ENCODE measurements at regions of chr1 and their contacts with region 1.

Region 1: GRCh38 chr1:103101399-103101798 is 6.9 kb downstream of the COL11A1 start:
- DNase-seq: no peak
- ATAC-seq: no peak
- H3K4me3 ChIP-seq: no peak overlapping the region
- H3K27ac ChIP-seq: no peak overlapping the region
- H3K4me1 ChIP-seq: peaks cover 0 to 1% (median 0%) of the 10 kb centered on the region in 9 donors
- H3K27me3 ChIP-seq: peaks cover 0 to 8% (median 3%) of the 10 kb centered on the region in 7 donors
- CTCF ChIP-seq: no peak

Region 2: DNA sequence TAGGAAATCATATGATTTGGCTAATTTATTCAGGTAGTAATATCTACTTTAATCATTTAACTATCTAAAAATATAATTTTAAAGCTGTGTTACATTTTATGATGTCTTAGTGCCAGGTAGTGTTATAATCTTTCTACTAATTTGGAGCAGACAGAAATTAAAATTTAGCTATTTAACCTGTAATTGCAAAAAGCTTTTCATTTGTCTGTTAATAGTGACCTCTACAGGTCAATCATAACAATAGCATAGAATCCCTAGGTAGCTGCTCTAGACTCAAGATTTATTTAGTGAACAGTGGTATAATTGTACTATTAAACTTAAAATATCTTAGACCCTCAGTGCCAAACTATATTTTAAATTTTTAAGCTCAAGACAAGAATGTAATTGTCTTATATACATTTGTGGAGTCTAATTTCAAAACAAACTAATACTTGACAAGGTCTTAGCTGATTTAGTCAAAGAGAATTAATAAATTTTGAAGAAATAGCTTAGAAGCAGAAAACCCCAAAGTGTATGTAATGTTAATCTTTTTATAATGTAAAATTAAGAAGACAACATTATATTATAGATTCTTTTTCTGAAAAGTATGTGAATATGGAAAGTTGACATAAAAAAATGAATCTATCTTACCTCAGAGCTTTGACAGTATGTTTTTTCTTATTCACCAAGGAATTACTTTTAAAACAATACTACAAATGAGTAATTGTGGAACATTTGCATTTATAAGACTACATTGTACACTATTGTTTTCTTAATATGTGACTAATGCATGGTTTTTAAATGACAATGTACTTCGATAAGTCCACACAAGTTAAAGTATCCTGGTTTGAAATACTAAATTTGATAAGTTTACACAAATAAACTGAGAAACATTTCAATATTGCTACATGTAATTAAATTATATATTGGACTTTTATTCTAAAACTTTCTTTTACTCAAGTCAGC is 360.0 kb after region 1 on chr1:
- intact Hi-C with region 1: loop called in 3 of 10 experiments (anchors 5 kb)
- DNase-seq: no peak
- ATAC-seq: no peak
- H3K4me3 ChIP-seq: no peak overlapping the region
- H3K27ac ChIP-seq: no peak overlapping the region
- H3K4me1 ChIP-seq: no peaks in the 10 kb centered on the region
- H3K27me3 ChIP-seq: no peaks in the 10 kb centered on the region
- CTCF ChIP-seq: peak in 7 of 9 donors; percentile 33 to 65 (median 53)